Sciatic nerve (tissue), 2 donors: ENCODE measurements at regions of chr5 and their contacts with region 1.

Region 1: DNA sequence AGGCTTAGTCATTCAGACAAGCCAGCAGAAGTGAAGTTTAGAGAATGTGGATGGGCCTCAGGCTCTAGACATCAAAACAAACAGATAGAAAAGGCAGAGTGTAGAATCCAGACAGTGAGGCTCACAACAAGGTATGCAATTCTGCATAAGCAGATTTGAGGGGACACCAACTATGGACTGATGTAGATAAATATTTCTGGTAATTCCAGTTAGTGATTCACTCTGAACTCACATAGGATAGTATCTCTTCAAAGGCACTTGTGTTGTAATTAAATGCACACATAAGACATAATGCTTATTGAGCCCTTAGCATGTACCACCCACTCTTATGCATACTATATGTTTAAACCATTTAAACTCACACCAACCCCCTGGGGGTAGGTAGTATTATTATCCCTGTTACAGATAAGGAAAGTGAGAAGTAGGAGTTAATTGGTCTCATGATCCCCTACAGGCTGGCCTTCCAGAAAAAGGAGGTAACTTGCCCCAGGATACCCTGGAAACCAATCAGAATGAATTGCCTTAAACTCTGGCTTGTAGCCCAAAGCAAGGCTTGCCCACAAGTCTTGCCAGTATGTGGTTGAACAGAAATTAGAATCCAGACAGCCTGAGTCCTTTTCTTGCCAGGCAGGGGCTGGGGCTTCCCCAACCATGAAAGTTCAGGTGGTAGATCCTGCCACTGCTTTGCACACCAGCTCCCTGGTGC is 39.5 kb upstream of the HSPB3 start:
- DNase-seq: no peak
- ATAC-seq: no peak

Region 2: GRCh38 chr5:54243473-54244080 is 172.5 kb before region 1 on chr5:
- intact Hi-C with region 1: loop called (anchors 10 kb)
- DNase-seq: no peak
- ATAC-seq: peak; percentile 57